ENCODE measurements at regions of chr17 and their contacts with region 1.

Region 1: GRCh38 chr17:17496189-17497064 is at the start of gene RASD1:
- DNase-seq: peak; percentile 83 to 97 (median 93)
- H3K4me3 ChIP-seq: peak within 1 kb of the TSS; percentile 55 to 88 (median 74)
- H3K27ac ChIP-seq: peak within 1 kb of the TSS in 57 of 59 donors; percentile 50 to 97 (median 89)
- H3K27me3 ChIP-seq: no peaks in the 10 kb centered on the region
- CTCF ChIP-seq: peak; percentile 74 to 100 (median 94)
- total RNA-seq, gene RASD1: 40.4 to 251 (median 136) TPM

Region 2: GRCh38 chr17:17108451-17109049 is 387.9 kb before region 1 on chr17:
- intact Hi-C with region 1: no loop called
- DNase-seq: peak; percentile 56 to 84 (median 80)
- H3K4me3 ChIP-seq: no peak overlapping the region
- H3K27ac ChIP-seq: peak overlapping the region in 58 of 59 donors; percentile 52 to 91 (median 82)
- H3K27me3 ChIP-seq: no peaks in the 10 kb centered on the region
- CTCF ChIP-seq: peak in 51 of 56 donors; percentile 19 to 68 (median 47)

Region 3: DNA sequence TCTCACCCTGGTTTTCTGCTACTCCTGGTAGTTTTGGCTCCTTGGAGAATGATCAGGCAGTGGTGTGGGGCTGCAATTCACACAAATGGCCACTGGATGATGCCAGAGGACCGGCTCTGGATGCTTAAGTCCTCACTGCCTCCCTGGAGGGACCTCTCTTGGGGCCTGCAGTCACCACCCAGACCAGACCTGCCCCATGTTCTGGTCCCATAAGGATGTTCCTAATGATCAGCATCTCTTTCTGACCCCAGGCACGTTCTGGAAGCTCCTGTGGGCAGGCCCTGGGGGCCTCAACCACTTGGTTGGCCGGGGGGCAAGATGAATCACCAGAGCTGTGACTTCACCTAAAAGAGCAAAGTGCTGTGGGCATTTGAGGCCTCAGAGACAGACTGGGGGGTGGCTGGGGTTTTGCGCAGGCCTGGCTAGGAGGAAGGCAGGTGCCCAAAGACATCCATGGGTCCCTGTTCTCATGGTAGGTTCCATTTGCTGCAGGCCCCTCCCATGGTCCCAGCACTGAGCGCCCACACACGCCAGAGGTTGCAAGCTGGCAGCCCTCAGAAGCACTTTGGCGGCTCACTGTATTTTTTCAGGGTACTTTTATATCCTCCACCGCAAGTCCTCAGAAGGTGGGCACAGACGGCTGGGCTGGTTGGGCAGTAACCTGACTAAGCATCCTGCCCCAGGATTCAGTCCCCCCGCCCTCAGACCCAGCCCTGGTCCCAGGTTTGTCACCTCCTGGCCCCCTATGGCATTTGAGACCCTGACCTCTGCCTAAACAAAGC is 140.1 kb before region 1 on chr17:
- intact Hi-C with region 1: loop called (anchors 1 to 2 kb)
- DNase-seq: peak; percentile 70 to 91 (median 86)
- H3K4me3 ChIP-seq: no peak overlapping the region
- H3K27ac ChIP-seq: peak overlapping the region in 13 of 59 donors; percentile 16 to 73 (median 41)
- H3K27me3 ChIP-seq: no peaks in the 10 kb centered on the region
- CTCF ChIP-seq: peak; percentile 90 to 100 (median 98)

Region 4: DNA sequence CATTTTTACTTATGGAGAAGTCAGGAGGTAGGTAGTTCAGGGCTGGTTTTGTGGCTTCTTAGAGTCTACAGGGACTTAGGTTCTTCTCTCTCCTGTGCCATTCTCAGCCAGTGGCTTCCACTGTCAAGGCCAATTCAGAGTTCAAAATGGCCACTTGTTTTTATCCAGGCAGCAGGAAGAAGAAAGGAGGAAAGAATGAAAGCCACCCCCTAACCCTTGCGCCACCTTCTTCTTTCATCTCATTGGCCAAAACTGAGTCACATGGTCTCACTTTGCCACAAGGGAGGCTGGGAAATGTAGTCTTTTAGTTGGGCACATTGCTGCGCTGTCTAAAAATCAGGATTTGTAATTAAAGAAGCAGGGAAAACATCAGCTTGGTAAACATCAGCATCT is 80.4 kb before region 1 on chr17:
- intact Hi-C with region 1: loop called (anchors 1 to 2 kb)
- DNase-seq: peak in 1 of 10 donors; percentile 52
- H3K4me3 ChIP-seq: no peak overlapping the region
- H3K27ac ChIP-seq: peak overlapping the region in 57 of 59 donors; percentile 27 to 92 (median 73)
- H3K27me3 ChIP-seq: peaks cover 0 to 13% (median 0%) of the 10 kb centered on the region in 45 donors
- CTCF ChIP-seq: no peak

Region 5: GRCh38 chr17:17535957-17536356 is 39.5 kb after region 1 on chr17:
- intact Hi-C with region 1: no loop called
- DNase-seq: peak; percentile 49 to 90 (median 80)
- H3K4me3 ChIP-seq: no peak overlapping the region
- H3K27ac ChIP-seq: peak overlapping the region in 39 of 59 donors; percentile 1 to 74 (median 33)
- H3K27me3 ChIP-seq: no peaks in the 10 kb centered on the region
- CTCF ChIP-seq: no peak

Region 6: GRCh38 chr17:17568749-17569195 is 72.3 kb after region 1 on chr17:
- intact Hi-C with region 1: loop called (anchors 1 to 2 kb)
- DNase-seq: peak in 8 of 10 donors; percentile 26 to 76 (median 62)
- H3K4me3 ChIP-seq: no peak overlapping the region
- H3K27ac ChIP-seq: no peak overlapping the region
- H3K27me3 ChIP-seq: no peaks in the 10 kb centered on the region
- CTCF ChIP-seq: peak; percentile 18 to 72 (median 61)

Region 7: DNA sequence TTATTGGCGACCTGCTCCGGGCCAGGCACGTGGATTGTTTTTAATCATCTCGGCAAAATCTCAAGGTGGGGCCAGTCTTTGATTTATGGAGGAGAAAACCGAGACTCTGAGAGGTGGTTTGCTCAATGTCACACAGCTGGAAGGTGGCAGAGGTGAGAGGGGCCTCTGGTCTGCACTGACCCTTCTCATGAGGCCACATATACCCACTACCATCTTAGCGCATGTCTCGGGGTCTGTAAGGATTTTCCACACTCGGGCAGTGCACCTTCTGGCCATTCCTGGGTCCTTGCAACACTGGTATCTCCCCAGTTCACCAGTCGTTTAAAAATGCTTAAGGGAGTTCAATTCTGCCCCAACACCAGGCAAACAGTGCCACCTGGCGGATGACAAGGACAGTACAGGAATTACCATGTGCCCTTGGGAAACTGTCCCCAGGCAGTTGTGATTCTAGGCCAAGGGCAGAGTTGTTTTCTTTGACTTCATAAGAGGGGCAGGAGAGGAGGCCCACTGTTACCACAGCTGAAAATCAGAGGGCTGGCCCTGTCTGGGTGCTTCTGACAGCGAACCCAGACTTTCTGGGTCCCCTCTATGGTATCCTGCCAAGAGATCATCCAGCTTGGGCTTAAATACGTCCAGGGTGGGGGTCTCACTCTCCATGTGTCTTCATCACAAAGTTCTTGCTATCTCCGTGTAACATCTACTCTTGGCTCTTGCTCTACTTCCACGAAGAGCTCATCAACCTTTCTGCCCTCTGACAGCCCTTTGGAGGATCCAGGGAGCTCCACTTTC is 145.4 kb after region 1 on chr17:
- intact Hi-C with region 1: loop called (anchors 2 to 5 kb)
- DNase-seq: peak; percentile 64 to 88 (median 78)
- H3K4me3 ChIP-seq: no peak overlapping the region
- H3K27ac ChIP-seq: peak overlapping the region in 1 of 59 donors; percentile 22
- H3K27me3 ChIP-seq: no peaks in the 10 kb centered on the region
- CTCF ChIP-seq: peak; percentile 68 to 96 (median 91)